ENCODE measurements at regions of chr3 and their contacts with region 1.

Region 1: DNA sequence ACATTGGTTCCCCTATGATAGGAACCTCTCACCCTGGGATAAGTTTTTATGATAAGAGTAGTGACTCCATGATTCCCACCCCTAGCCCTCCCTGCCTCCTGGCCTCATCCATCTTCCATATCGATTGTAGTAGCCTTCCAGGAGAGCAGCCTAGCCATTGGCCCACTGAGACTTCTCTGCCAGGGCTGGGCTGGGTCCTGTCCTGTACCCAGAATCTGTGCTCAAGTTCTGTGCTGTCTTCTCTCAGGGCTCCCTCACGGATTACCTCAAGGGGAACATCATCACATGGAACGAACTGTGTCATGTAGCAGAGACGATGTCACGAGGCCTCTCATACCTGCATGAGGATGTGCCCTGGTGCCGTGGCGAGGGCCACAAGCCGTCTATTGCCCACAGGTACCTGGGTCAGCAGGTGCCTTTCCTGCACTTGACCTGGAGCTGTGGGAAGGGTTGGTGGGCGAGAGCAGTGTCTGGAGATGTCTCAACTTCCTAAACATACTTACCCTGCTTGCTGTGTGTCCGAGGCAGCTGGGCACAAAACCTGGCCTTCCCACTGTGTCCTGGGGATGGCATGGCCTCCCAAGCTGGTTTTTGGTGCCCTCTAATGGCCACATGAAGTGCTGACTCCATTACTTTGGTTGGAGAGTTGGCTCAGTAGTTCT is 16.6 kb upstream of the EXOG start:
- DNase-seq: peak; percentile 73 to 87
- H3K4me3 ChIP-seq: no peak overlapping the region
- H3K27ac ChIP-seq: no peak overlapping the region
- H3K4me1 ChIP-seq: no peaks in the 10 kb centered on the region
- H3K27me3 ChIP-seq: no peaks in the 10 kb centered on the region
- CTCF ChIP-seq: peak in 5 of 7 experiments; percentile 72 to 83 (median 79)
- EP300 ChIP-seq: no peak
- POLR2A ChIP-seq: no peak

Region 2: GRCh38 chr3:38127611-38128302 is 351.8 kb before region 1 on chr3:
- intact Hi-C with region 1: loop called (anchors 10 kb)
- DNase-seq: peak in 1 of 2 donors; percentile 15
- H3K4me3 ChIP-seq: no peak overlapping the region
- H3K27ac ChIP-seq: no peak overlapping the region
- H3K4me1 ChIP-seq: peaks cover 5 to 45% (median 18%) of the 10 kb centered on the region in 4 donors
- H3K27me3 ChIP-seq: no peaks in the 10 kb centered on the region
- CTCF ChIP-seq: no peak
- EP300 ChIP-seq: no peak
- POLR2A ChIP-seq: no peak

Region 3: DNA sequence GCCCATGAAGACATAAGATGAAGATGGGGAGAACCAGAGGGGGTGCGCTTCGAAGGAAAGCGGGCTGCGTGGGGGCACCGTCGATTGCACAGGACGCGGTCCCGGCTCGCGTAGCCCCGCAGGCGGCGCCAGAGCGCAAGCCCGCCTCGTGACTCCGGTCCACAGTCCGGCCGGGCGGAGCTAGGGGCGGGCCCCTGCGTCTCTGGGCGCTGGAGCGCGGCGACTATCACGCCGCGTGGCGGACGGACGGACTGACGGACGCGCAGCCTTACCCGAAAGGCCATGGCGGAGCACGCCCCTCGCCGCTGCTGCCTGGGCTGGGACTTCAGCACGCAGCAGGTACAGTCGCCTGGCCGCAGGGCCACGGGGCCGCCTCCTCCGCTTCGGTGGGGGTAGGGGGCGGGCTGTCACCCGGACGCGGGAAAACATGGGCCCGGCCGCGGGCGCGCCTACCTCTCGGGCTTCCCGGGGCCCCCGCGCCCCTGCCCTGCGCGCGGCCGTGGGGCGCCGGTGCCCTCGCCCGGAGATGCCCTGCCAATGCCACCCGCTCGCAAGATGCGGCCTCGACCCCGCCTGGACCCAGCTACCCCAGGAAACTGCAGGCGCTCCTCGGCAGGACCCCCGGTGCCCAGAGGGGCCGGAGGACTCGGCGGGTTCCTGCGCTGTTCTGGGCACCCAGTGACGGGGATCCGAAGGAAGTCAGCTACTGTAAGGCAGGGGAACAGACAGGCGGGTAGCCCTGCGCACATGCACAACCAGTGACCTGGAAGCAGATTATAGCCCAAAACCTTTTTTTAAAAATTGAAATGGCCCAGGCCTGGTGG is 132.8 kb before region 1 on chr3 and contains the start of gene XYLB:
- intact Hi-C with region 1: loop called (anchors 5 kb)
- DNase-seq: peak; percentile 91 to 96
- H3K4me3 ChIP-seq: peak within 1 kb of the TSS; percentile 75 to 93 (median 83)
- H3K27ac ChIP-seq: peak within 1 kb of the TSS; percentile 60 to 87 (median 79)
- H3K4me1 ChIP-seq: peaks cover 10 to 33% (median 21%) of the 10 kb centered on the region in 4 donors
- H3K27me3 ChIP-seq: no peaks in the 10 kb centered on the region
- CTCF ChIP-seq: peak in 5 of 7 experiments; percentile 75 to 88 (median 83)
- EP300 ChIP-seq: no peak
- POLR2A ChIP-seq: no peak
- total RNA-seq, gene XYLB: 2.3 to 41.6 (median 8.3) TPM

Measured in stomach (tissue), 19 donors.